ENCODE measurements at regions of chr15 and their contacts with region 1.

Region 1: DNA sequence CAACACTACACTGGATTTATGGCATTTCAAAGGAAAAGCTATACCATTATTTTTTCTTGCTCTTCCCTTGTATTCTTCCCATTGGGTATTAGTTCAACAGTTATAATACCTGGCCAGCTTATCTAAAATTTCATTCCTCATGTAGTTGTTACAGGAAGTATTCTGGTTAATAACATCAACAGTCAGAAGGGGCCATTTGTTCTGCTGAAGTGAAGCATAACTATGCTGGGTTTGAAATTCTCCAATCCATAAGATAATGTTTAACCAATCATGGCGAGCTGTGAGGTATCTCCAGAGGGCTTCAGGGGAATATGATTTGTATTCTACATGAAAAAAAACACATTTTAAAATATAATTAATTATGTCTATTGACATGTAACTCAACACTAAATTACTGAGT is 43.4 kb downstream of the SPG11 start:
- DNase-seq: no peak
- H3K4me3 ChIP-seq: no peak overlapping the region
- H3K27ac ChIP-seq: no peak overlapping the region
- H3K4me1 ChIP-seq: no peaks in the 10 kb centered on the region
- H3K27me3 ChIP-seq: no peaks in the 10 kb centered on the region
- CTCF ChIP-seq: no peak
- POLR2A ChIP-seq: no peak

Region 2: DNA sequence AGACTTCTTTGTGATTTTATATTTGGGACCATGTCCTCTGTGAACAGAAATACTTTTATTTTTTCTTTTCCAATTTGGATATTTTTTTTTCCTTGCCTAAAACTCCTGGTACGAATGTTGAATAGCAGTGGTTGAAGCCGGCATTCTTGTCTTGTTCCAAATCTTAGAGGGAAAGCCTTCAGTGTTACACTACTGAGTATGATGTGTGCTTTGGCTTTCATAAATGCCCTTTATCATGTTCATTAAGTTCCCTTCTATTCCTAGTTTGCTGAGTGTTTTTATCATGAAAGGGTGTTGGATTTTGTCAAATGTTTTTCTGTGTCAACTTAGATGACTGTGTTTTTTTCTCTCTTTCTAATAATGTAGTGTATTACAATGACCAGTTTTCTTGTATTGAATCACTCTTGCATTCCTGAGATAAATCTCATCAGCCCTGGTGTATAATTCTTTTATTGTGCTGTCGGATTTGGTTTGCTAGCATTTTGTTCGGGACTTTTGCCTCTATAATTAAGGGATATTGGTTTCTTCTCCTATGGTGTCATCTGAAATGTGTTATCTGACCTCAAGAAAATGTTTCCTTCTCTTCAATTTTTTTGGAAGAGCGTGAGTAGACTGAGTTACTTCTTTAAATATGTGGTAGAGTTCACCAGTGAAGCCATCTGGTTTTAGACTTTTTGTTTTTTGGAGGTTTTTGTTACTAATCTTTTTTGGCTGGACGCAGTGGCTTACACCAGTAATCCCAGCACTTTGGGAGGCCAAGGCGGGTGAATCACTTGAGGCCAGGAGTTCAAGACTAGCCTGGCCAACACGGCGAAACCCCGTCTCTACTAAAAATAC is 1069.3 kb before region 1 on chr15:
- intact Hi-C with region 1: no loop called
- DNase-seq: no peak
- H3K4me3 ChIP-seq: no peak overlapping the region
- H3K27ac ChIP-seq: peak overlapping the region in 1 of 2 donors; percentile 34
- H3K4me1 ChIP-seq: no peaks in the 10 kb centered on the region
- H3K27me3 ChIP-seq: no peaks in the 10 kb centered on the region
- CTCF ChIP-seq: no peak
- POLR2A ChIP-seq: no peak

Region 3: GRCh38 chr15:44682211-44682610 is 62.1 kb after region 1 on chr15:
- intact Hi-C with region 1: loop called (anchors 10 kb)
- DNase-seq: no peak
- H3K4me3 ChIP-seq: no peak overlapping the region
- H3K27ac ChIP-seq: no peak overlapping the region
- H3K4me1 ChIP-seq: no peaks in the 10 kb centered on the region
- H3K27me3 ChIP-seq: no peaks in the 10 kb centered on the region
- CTCF ChIP-seq: no peak
- POLR2A ChIP-seq: no peak

Region 4: DNA sequence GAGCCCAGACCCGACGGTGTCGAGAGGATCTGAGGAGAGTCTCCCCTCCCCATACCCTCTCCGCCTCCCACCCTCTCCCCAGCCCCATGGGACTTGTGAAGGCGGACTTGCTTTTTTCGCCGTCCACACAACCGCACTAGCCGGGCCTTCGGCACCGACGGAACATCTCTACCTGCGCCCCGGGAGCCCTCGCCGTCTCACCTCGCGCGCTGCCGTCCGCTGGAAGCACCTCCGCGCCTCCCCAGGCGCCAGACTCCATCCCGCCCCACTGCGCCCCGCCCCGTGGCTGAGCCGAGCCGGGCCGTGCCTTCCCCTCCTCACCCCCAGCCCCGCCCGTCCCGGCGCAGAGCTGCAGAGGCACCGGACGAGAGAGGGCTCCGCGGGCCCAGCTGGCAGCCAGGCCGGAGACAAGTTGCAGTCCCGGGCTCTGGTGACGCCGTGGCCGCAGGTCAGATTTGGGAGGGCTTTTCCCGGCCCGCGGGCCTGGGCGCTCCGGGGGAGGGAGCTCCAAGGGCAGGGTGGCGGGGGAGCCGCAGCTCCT is 509.6 kb after region 1 on chr15 and contains the starts of genes DUOX1 and DUOXA1:
- intact Hi-C with region 1: no loop called
- DNase-seq: no peak
- H3K4me3 ChIP-seq: no peak within 1 kb of the TSS
- H3K27ac ChIP-seq: no peak within 1 kb of the TSS
- H3K4me1 ChIP-seq: no peaks in the 10 kb centered on the region
- H3K27me3 ChIP-seq: peaks cover under 1 to 7% of the 10 kb centered on the region in 2 donors
- CTCF ChIP-seq: no peak
- POLR2A ChIP-seq: no peak
- total RNA-seq, gene DUOX1: 0.24 to 1.3 (median 0.26) TPM in 3 of 4 donors, not detected in the other
- total RNA-seq, gene DUOXA1: 1.4 to 2.5 TPM in 2 of 4 donors, not detected in the others